OCI-LY7 (cell line): ENCODE measurements at regions of chr5 and their contacts with region 1.

Region 1: DNA sequence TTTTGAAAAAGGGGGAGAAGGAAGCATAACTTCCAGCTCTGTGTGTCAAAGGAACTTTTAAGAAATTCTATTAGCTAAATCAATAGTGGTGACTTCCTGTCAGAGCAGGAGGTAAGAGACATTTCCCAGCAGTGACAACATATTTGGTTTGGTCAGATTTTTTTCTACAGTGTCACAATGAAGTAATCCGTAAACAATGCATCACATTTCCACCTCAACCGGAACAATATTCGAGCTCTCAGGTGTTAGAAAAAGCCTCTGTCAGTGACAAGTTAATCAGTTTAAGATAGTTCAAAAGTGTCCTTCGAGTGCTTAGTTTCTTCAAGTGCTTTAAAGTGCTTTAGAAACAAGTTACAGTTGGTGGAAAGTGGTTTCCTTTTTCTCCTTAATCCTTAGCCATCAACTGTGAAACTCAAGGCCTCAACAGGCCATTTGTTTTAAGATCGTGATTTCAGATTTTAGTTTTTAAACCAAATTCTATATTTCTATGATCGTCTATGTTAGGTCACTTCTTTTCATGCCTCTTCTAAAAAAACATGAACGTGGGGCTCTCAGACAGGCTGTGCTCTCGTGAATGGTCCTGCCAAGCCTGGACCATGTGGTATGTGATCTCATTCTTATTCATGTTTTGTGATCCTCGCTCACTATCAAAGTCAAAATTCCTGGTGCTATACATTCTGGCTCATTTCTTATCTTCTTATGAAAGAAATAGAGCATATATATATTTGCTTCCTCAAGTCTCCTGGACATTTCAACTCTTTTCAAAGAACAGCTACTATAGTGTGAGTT is 181.9 kb upstream of the HMHB1 start:
- DNase-seq: no peak
- H3K4me3 ChIP-seq: no peak overlapping the region
- H3K27ac ChIP-seq: no peak overlapping the region
- H3K4me1 ChIP-seq: no peaks in the 10 kb centered on the region
- CTCF ChIP-seq: no peak

Region 2: GRCh38 chr5:143153332-143154119 is 476.5 kb before region 1 on chr5:
- CTCF ChIA-PET with region 1: no interaction called
- POLR2A ChIA-PET with region 1: no interaction called
- intact Hi-C with region 1: no loop called
- DNase-seq: no peak
- H3K4me3 ChIP-seq: no peak overlapping the region
- H3K27ac ChIP-seq: no peak overlapping the region
- H3K4me1 ChIP-seq: no peaks in the 10 kb centered on the region
- CTCF ChIP-seq: no peak

Region 3: DNA sequence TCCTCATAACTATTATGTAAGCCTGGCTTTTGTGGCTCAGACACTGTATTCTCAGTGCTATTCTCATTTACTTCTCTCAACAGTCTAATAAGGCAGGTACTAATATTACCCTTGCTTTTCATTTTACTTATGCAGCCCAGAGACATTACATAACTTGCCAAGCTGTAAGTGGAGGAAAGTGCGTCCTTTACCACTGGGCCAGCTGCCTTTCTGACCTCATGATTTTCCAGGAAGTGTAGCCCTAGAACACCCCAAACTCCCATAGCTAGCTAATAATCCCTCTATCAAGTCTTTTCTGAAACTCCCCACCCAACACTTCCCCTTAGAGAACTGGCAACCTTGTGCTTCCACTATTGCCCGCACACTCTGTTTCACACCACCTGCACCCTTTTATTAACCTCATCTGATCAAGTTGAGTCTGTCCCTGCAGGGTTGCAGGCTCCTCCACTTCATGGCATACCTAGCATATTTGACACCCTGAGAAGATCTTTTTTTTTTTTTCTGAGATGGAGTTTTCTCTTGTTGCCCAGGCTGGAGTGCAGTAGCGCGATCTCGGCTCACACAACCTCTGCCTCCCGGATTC is 10.9 kb before region 1 on chr5:
- CTCF ChIA-PET with region 1: no interaction called
- POLR2A ChIA-PET with region 1: interaction called, 16 read pairs
- intact Hi-C with region 1: no loop called
- DNase-seq: no peak
- H3K4me3 ChIP-seq: no peak overlapping the region
- H3K27ac ChIP-seq: no peak overlapping the region
- H3K4me1 ChIP-seq: no peaks in the 10 kb centered on the region
- CTCF ChIP-seq: no peak

Region 4: GRCh38 chr5:143662020-143662419 is 32.0 kb after region 1 on chr5:
- CTCF ChIA-PET with region 1: no interaction called
- POLR2A ChIA-PET with region 1: no interaction called
- intact Hi-C with region 1: no loop called
- DNase-seq: no peak
- H3K4me3 ChIP-seq: no peak overlapping the region
- H3K27ac ChIP-seq: no peak overlapping the region
- H3K4me1 ChIP-seq: no peaks in the 10 kb centered on the region
- CTCF ChIP-seq: no peak